ENCODE measurements at regions of chr6 and their contacts with region 1.

Region 1: GRCh38 chr6:124033501-124033900 is 229.8 kb downstream of the NKAIN2 start:
- DNase-seq: no peak
- H3K4me3 ChIP-seq: no peak overlapping the region
- H3K27ac ChIP-seq: no peak overlapping the region
- H3K4me1 ChIP-seq: no peaks in the 10 kb centered on the region
- H3K27me3 ChIP-seq: no peaks in the 10 kb centered on the region
- CTCF ChIP-seq: no peak
- EP300 ChIP-seq: no peak
- POLR2A ChIP-seq: no peak

Region 2: DNA sequence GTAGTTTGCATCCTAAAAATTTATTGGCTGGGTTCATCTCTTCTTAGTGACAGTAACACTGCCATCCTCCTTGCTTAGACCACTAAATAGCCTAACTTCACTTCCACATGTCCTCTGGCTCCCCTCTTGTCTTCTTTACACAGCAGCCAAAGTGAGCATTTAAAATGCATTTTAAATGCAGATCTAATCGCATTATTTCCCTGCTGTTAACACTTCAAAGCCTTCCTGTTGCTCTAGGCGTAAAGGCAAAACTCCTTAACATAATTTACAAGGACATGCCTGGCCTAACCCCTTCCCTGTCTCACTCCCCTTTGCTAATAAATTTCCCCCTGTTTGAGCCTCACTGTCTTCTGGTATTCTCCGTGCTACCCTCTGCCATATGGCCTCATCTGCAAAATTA is 203.4 kb before region 1 on chr6:
- in situ Hi-C with region 1: no loop called
- intact Hi-C with region 1: loop called (anchors 5 kb)
- DNase-seq: no peak
- H3K4me3 ChIP-seq: no peak overlapping the region
- H3K27ac ChIP-seq: no peak overlapping the region
- H3K4me1 ChIP-seq: no peaks in the 10 kb centered on the region
- H3K27me3 ChIP-seq: no peaks in the 10 kb centered on the region
- CTCF ChIP-seq: no peak
- EP300 ChIP-seq: no peak
- POLR2A ChIP-seq: no peak

Region 3: DNA sequence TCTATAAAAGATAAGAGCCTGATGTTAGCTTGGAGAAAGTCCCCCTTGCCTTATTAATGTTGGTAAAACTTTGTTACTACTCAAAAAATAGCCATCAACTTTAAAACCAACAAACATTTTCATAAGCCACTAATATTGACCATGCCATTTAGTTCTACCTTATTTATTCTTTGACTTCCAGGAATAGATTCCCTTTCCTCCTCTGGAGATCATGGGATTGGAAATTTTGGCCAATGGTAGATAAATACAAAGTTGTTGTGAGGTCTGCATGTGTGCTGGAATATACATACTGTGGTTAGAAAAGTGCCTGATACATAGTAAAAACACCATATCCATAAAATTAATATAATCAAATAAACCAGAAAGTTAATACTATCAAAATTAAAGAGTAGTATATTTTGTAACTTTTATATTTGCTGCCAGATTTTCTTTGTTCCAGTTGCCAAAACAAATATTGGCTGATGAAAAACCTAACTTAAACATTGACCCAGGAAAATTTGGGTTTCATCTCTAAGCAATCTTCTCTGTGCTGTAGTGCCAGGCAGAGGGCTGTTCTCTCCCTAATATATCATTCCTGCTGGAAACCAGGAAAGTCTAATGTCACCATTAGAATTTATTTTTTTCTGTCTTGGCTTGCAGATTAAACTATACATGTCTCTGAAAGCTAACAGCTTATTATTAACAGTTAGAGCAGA is 60.8 kb before region 1 on chr6:
- in situ Hi-C with region 1: no loop called
- intact Hi-C with region 1: no loop called
- DNase-seq: no peak
- H3K4me3 ChIP-seq: no peak overlapping the region
- H3K27ac ChIP-seq: no peak overlapping the region
- H3K4me1 ChIP-seq: no peaks in the 10 kb centered on the region
- H3K27me3 ChIP-seq: no peaks in the 10 kb centered on the region
- CTCF ChIP-seq: no peak
- EP300 ChIP-seq: no peak
- POLR2A ChIP-seq: no peak

Region 4: GRCh38 chr6:124119596-124119995 is 86.1 kb after region 1 on chr6:
- in situ Hi-C with region 1: no loop called
- intact Hi-C with region 1: no loop called
- DNase-seq: no peak
- H3K4me3 ChIP-seq: no peak overlapping the region
- H3K27ac ChIP-seq: no peak overlapping the region
- H3K4me1 ChIP-seq: no peaks in the 10 kb centered on the region
- H3K27me3 ChIP-seq: no peaks in the 10 kb centered on the region
- CTCF ChIP-seq: no peak
- EP300 ChIP-seq: no peak
- POLR2A ChIP-seq: no peak

Region 5: GRCh38 chr6:124355146-124355545 is 321.6 kb after region 1 on chr6:
- in situ Hi-C with region 1: no loop called
- intact Hi-C with region 1: no loop called
- DNase-seq: no peak
- H3K4me3 ChIP-seq: no peak overlapping the region
- H3K27ac ChIP-seq: no peak overlapping the region
- H3K4me1 ChIP-seq: no peaks in the 10 kb centered on the region
- H3K27me3 ChIP-seq: no peaks in the 10 kb centered on the region
- CTCF ChIP-seq: no peak
- EP300 ChIP-seq: no peak
- POLR2A ChIP-seq: no peak

Region 6: DNA sequence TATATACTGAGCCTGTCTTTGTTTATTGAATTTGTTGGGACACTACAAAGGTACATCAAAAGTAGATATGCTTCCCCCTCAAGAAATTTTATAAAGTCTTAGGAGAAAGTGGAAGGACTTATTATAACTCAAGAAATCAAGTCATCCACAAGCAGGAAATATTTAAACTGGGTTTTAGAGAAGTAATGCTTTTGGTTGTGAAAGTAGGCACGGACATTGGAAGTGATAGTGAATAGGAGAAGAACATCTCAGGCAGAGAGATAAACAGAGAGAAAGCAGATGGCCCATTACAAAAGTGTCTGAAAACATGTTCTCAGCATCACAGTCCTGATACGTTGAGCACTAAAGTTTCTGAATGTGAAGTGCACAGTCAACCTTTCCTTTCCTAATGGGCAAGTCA is 513.1 kb after region 1 on chr6:
- in situ Hi-C with region 1: no loop called
- intact Hi-C with region 1: no loop called
- DNase-seq: no peak
- H3K4me3 ChIP-seq: no peak overlapping the region
- H3K27ac ChIP-seq: no peak overlapping the region
- H3K4me1 ChIP-seq: no peaks in the 10 kb centered on the region
- H3K27me3 ChIP-seq: no peaks in the 10 kb centered on the region
- CTCF ChIP-seq: no peak
- EP300 ChIP-seq: no peak
- POLR2A ChIP-seq: no peak

Measured in transverse colon (tissue), 4 donors.